Dendritic cell treated with granulocyte-macrophage colony-stimulating factor and Interleukin-4, amounts not matched to agents 40 ng/mL and 50 ng/mL, for 4 days (primary cell): ENCODE measurements at regions of chr6 and their contacts with region 1.

Region 1: GRCh38 chr6:24283043-24283985 is 74.5 kb downstream of the DCDC2 start:
- H3K4me3 Mint-ChIP-seq: no peak overlapping the region
- H3K27ac Mint-ChIP-seq: no peak overlapping the region
- H3K4me1 Mint-ChIP-seq: no peaks in the 10 kb centered on the region
- H3K27me3 Mint-ChIP-seq: peaks cover 4% of the 10 kb centered on the region

Region 2: DNA sequence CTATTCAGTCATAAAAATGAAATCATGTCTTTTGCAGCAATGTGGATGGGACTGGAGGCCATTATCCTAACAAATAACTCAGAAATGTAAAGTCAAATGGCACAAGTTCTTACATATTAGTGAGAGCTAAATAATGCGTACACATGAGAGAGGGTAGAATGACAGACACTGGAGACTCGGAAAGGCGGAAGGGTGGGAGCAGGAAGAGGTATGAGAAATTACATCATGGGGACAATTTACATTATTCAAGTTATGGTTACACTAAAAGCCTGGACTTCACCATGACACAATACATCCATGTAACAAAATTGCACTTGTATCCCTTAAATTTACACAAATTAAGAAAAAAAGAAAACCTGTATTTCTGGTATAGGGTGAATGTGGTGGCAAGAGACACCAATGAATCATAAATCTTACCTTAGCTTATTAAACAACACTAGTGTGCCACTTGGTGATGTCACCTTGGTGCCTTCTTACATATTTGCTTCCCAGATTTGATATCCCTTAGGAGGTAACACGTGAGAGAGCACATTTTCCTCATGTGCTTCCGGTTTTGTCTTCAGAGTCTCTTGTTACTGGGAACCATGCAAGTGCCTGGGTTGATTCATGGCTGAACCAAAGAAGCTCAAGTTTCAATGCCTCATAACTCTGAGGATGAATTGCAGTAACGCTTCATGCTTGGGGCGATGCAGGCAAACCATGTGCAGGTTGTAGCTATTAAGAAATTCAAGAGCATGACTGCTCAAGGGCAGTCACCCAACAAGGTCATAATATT is 10.0 kb before region 1 on chr6:
- intact Hi-C with region 1: no loop called
- H3K4me3 Mint-ChIP-seq: no peak overlapping the region
- H3K27ac Mint-ChIP-seq: no peak overlapping the region
- H3K4me1 Mint-ChIP-seq: no peaks in the 10 kb centered on the region
- H3K27me3 Mint-ChIP-seq: peaks cover 2% of the 10 kb centered on the region

Region 3: DNA sequence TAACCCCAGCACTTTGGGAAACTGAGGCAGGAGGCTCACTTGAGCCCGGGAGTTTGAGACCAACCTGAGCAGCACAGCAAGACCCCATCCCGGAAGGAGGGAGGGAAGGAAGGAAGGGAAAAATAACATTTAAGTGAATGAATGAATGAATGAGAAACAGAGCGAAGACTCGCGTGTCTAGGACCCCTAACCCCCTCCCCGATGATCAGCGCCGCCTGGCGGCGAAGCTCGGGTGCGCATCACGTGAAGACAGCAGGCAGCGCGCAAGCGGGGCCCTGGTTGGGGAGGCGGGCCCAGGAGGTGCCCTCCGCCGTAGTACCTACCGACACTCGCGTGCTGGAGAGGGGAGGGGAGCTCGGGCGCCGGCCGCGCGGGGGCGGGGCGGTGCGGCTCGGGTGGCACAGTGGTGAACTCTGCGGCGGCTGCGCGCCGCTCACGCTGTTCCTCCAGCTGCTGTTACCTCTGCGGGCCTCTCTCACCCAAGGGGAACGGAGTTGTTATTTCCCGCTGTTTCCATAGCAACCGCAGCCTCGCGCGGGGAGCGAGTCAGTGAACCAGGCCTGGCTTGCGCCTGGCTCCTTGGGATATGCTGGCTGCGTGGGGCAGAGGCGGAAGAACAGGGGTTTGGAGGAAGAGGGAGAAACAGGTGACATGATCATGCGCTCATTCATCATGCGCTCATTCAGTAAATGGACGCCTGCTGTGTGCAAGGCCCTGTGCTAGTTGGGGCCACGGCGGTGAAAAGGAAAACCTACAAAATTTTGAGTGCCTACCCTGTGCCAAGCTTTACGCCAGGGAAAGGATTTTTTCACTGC is 76.5 kb after region 1 on chr6:
- intact Hi-C with region 1: loop called (anchors 1 kb)
- H3K4me3 Mint-ChIP-seq: peak overlapping the region; percentile 72
- H3K27ac Mint-ChIP-seq: no peak overlapping the region
- H3K4me1 Mint-ChIP-seq: peaks cover 21% of the 10 kb centered on the region
- H3K27me3 Mint-ChIP-seq: peaks cover 43% of the 10 kb centered on the region

Region 4: GRCh38 chr6:24385536-24386269 is 102.4 kb after region 1 on chr6:
- intact Hi-C with region 1: loop called (anchors 10 kb)
- H3K4me3 Mint-ChIP-seq: no peak overlapping the region
- H3K27ac Mint-ChIP-seq: no peak overlapping the region
- H3K4me1 Mint-ChIP-seq: no peaks in the 10 kb centered on the region
- H3K27me3 Mint-ChIP-seq: no peaks in the 10 kb centered on the region

Region 5: GRCh38 chr6:24689964-24690363 is 406.6 kb after region 1 on chr6:
- intact Hi-C with region 1: loop called (anchors 10 kb)
- H3K4me3 Mint-ChIP-seq: no peak overlapping the region
- H3K27ac Mint-ChIP-seq: no peak overlapping the region
- H3K4me1 Mint-ChIP-seq: peaks cover 13% of the 10 kb centered on the region
- H3K27me3 Mint-ChIP-seq: no peaks in the 10 kb centered on the region